Calu3 (cell line): ENCODE measurements at regions of chrX and their contacts with region 1.

Region 1: DNA sequence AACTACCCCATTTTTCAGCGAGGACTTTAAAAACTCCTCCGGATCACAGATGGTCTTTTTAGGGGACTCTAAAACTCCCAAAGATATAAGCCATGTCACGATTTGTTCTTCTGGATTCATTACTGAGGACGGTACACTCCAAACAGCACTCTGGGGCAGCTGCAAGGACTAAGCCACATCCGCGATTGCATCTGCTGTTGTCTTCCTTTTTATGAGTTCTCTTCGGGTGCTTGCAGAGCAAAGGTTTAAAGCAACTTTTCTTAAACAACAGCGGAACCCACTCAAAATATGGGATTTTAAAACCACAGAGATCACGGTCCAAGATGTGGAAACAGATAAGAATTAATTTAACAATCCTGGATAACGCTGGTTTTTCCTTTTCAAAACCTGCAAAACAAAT is at the start of gene ARHGEF6:
- DNase-seq: no peak
- H3K4me3 Mint-ChIP-seq: no peak within 1 kb of the TSS
- H3K27ac Mint-ChIP-seq: no peak within 1 kb of the TSS
- H3K4me1 Mint-ChIP-seq: no peaks in the 10 kb centered on the region
- H3K27me3 Mint-ChIP-seq: peaks cover 7% of the 10 kb centered on the region
- CTCF ChIP-seq: no peak
- total RNA-seq, gene ARHGEF6: 0.07 and 0.17 TPM in 2 replicates

Region 2: DNA sequence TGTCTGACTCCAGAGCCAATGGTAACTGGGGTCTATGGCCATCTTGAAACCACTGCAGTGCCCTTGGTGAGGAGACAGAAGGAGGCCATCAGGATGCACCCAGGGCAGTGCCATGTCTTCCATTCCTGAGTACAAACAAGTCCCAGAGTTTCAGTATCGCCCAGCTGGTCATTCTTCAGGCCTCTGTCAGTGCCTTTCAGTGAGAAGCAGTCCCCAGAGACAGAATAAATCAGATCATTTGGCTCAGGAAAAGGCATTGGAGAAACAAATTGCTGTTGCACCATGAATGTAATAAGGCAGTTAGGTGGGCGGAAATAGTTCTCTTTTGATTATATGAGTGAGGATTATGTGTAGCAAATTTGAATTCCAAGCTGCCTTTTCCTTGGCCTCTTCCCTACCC is 458.7 kb before region 1 on chrX:
- CTCF ChIA-PET with region 1: no interaction called
- intact Hi-C with region 1: loop called (anchors 5 kb)
- DNase-seq: no peak
- H3K4me3 Mint-ChIP-seq: no peak overlapping the region
- H3K27ac Mint-ChIP-seq: no peak overlapping the region
- H3K4me1 Mint-ChIP-seq: no peaks in the 10 kb centered on the region
- H3K27me3 Mint-ChIP-seq: no peaks in the 10 kb centered on the region
- CTCF ChIP-seq: no peak

Region 3: DNA sequence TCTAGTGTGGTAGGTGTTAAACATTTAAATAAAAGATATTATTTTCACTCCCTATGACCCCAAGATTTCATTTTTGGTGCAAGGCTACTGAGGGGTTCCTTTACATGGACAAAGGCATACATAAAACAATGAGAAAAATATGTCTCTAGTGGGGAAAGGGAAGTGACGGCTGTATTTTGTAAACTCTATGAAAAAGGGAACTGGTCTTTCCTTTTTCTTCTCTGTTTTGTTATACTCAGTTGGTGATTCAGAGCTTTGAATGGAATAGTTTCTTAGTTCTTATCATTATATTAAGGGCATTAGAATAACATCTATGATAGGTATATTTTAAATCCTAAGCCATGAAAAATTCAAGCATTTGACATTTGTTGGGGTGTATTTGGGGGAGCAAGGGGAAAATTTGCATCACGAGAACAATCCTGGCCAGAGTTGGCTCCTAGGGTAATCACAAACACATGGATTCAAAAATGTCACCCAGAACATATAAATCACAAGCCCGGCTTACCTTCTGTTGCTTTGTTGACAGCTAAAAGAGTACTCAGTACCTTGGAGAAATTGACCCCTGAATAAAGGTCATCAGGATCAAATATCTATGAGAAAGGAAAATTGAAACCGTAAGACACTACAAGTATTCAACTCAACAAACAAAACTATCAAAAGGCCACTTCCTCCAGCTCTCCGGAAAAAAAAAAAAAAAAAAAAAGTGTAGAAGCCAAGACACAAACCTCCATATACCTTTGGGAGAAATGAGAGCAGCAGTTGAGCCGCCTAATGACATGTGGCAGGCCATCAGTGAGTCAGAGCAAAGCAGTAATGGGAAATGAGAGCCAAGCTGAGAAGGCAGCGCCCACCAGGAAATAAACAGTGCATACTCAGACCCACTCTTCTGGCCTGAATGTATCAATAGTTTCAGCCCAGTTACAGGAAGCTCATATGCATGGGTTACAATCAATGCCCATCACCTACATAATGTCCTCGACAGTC is 33.5 kb before region 1 on chrX:
- CTCF ChIA-PET with region 1: no interaction called
- intact Hi-C with region 1: no loop called
- DNase-seq: no peak
- H3K4me3 Mint-ChIP-seq: no peak overlapping the region
- H3K27ac Mint-ChIP-seq: no peak overlapping the region
- H3K4me1 Mint-ChIP-seq: no peaks in the 10 kb centered on the region
- H3K27me3 Mint-ChIP-seq: peaks cover 25% of the 10 kb centered on the region
- CTCF ChIP-seq: no peak